Gastrocnemius medialis (tissue), 4 donors: ENCODE measurements at regions of chrX and their contacts with region 1.

Region 1: GRCh38 chrX:84729809-84730208 is 227.6 kb upstream of the HDX start:
- DNase-seq: no peak
- ATAC-seq: peak; percentile 64 to 69
- H3K4me3 ChIP-seq: no peak overlapping the region
- H3K27ac ChIP-seq: no peak overlapping the region
- H3K4me1 ChIP-seq: no peaks in the 10 kb centered on the region
- H3K27me3 ChIP-seq: no peaks in the 10 kb centered on the region
- CTCF ChIP-seq: peak in 4 of 5 experiments; percentile 28 to 69 (median 52)
- POLR2A ChIP-seq: no peak

Region 2: DNA sequence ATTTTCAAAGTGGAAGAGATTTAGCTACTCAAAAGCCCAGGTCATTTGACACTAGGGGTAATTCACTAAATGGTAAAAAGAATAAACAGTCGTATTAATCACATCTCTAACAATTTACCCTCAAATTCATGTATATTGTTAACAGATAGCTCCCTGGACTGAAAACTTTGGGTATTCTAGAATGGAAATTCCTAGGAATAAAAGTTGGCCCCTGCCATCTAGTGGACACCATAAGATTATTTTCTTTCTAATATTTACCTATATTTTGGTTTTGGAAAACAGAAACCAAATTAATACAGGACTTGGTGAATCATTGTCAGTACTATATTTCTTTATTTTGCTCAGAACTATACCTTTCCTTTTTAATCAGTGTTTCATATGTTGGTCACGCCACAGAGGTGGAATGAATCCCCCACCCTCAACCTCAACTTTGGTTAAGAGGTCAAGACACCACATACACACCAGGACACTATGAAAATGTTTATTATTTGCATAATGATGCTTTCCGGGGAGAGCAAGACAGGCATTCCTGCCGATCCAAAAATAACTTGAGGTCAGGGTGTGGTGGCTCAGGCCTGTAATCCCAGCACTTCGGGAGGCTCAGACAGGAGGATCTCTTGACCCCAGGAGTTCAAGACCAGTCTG is 177.6 kb after region 1 on chrX:
- in situ Hi-C with region 1: loop called in 1 of 4 experiments (anchors 25 kb)
- intact Hi-C with region 1: loop called (anchors 5 kb)
- DNase-seq: no peak
- ATAC-seq: no peak
- H3K4me3 ChIP-seq: no peak overlapping the region
- H3K27ac ChIP-seq: no peak overlapping the region
- H3K4me1 ChIP-seq: no peaks in the 10 kb centered on the region
- H3K27me3 ChIP-seq: no peaks in the 10 kb centered on the region
- CTCF ChIP-seq: no peak
- POLR2A ChIP-seq: no peak

Region 3: DNA sequence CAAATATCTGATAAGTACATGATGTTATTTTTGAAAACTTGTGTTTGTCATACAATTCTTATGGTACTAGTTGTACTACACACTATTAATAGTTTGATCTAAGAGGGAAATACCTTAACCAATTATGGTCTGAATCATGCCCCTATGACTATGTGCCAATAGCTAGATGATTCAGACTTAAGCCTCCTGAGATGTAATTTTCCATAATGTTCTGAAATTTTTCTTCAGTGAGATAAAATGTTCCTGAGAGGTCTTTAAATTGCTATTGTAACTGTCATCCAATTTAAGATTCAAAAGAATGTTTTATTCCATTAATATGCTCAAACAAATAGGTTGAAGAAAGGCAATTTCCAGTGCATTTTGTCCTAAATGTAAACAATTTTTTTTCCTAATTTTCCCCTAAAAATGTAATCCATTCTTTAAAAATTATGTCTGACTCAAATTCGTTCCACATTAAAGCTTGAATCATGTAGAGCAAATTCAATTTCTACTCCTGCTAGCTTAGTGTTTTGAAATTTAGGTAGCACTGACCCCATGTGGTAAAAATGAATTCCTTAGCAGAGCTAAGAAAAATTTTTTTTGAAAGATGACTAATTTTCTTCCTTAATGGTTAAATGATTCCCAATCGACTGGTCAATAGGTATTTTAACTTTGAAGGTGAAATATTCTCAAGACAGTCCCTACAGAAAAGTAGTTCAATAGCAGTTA is 323.0 kb after region 1 on chrX:
- in situ Hi-C with region 1: no loop called
- intact Hi-C with region 1: loop called (anchors 10 kb)
- DNase-seq: no peak
- ATAC-seq: no peak
- H3K4me3 ChIP-seq: no peak overlapping the region
- H3K27ac ChIP-seq: no peak overlapping the region
- H3K4me1 ChIP-seq: no peaks in the 10 kb centered on the region
- H3K27me3 ChIP-seq: no peaks in the 10 kb centered on the region
- CTCF ChIP-seq: peak in 1 of 5 experiments; percentile 10
- POLR2A ChIP-seq: no peak